Activated CD8-positive, alpha-beta T cell treated with anti-CD3 and anti-CD28 coated beads for 36 hours (primary cell): ENCODE measurements at regions of chr7 and their contacts with region 1.

Region 1: GRCh38 chr7:25054819-25055519 is 70.1 kb downstream of the CYCS start:
- DNase-seq: no peak
- ATAC-seq: no peak
- H3K4me3 Mint-ChIP-seq: no peak overlapping the region
- H3K27ac Mint-ChIP-seq: no peak overlapping the region
- H3K4me1 Mint-ChIP-seq: no peaks in the 10 kb centered on the region
- H3K27me3 Mint-ChIP-seq: no peaks in the 10 kb centered on the region
- CTCF ChIP-seq: no peak

Region 2: GRCh38 chr7:25028370-25029021 is 26.5 kb before region 1 on chr7:
- CTCF ChIA-PET with region 1: no interaction called
- POLR2A ChIA-PET with region 1: interaction called, 3 read pairs
- intact Hi-C with region 1: loop called (anchors 2 kb)
- DNase-seq: peak; percentile 48
- ATAC-seq: peak; percentile 78
- H3K4me3 Mint-ChIP-seq: no peak overlapping the region
- H3K27ac Mint-ChIP-seq: peak overlapping the region; percentile 92
- H3K4me1 Mint-ChIP-seq: peaks cover 42% of the 10 kb centered on the region
- H3K27me3 Mint-ChIP-seq: no peaks in the 10 kb centered on the region
- CTCF ChIP-seq: no peak

Region 3: GRCh38 chr7:25206765-25207164 is 151.8 kb after region 1 on chr7:
- CTCF ChIA-PET with region 1: no interaction called
- POLR2A ChIA-PET with region 1: no interaction called
- intact Hi-C with region 1: no loop called
- DNase-seq: no peak
- ATAC-seq: no peak
- H3K4me3 Mint-ChIP-seq: no peak overlapping the region
- H3K27ac Mint-ChIP-seq: no peak overlapping the region
- H3K4me1 Mint-ChIP-seq: no peaks in the 10 kb centered on the region
- H3K27me3 Mint-ChIP-seq: peaks cover 23% of the 10 kb centered on the region
- CTCF ChIP-seq: no peak

Region 4: DNA sequence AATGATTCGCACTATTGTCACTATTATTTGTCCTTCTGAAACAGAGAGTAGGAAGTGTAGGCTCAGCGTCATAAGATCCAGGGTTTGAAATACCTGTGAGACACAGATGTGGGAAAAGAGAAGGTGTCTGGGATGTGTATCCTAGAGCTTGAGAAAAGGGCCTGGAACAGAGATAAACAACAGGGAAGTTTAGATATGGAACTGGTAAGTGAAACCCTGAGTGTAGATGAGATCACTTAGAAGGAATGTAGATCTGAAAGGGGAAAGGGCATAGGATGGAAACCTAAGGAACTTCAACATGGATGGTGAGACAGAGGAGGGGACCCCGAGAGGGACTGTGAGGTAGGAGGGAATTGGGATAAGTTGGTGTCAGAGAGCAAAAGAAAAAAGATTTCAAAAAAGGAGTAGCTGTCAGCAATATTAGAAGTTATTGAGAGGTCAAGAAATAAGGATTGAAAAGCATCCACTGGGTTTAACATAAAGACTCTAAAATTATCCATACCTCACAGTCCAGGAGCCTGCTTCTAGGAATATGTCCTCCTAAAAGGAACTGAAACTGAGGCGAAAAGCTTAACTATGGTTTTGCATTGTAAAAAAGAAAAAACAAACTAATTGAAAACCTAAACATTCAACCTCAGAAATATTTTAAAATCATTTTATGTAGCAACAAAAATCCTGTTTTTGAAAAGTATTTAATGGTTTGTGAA is 292.5 kb after region 1 on chr7:
- CTCF ChIA-PET with region 1: no interaction called
- POLR2A ChIA-PET with region 1: no interaction called
- intact Hi-C with region 1: no loop called
- DNase-seq: no peak
- ATAC-seq: no peak
- H3K4me3 Mint-ChIP-seq: no peak overlapping the region
- H3K27ac Mint-ChIP-seq: no peak overlapping the region
- H3K4me1 Mint-ChIP-seq: no peaks in the 10 kb centered on the region
- H3K27me3 Mint-ChIP-seq: peaks cover 12% of the 10 kb centered on the region
- CTCF ChIP-seq: no peak